ENCODE measurements at regions of chr15 and their contacts with region 1.

Region 1: GRCh38 chr15:81265944-81266775 is 57.8 kb downstream of the STARD5 start:
- DNase-seq: peak; percentile 74
- ATAC-seq: peak; percentile 95
- H3K4me3 ChIP-seq: peak overlapping the region; percentile 10 to 25; a peak in 3 of 4 replicates
- H3K27ac ChIP-seq: no peak overlapping the region
- H3K4me1 ChIP-seq: peaks cover 5 to 10% of the 10 kb centered on the region in 2 experiments
- H3K27me3 ChIP-seq: no peaks in the 10 kb centered on the region
- CTCF ChIP-seq: peak; percentile 86 to 95 (median 92)
- POLR2A ChIP-seq: no peak
- RAD21 ChIP-seq: peak; percentile 92

Region 2: DNA sequence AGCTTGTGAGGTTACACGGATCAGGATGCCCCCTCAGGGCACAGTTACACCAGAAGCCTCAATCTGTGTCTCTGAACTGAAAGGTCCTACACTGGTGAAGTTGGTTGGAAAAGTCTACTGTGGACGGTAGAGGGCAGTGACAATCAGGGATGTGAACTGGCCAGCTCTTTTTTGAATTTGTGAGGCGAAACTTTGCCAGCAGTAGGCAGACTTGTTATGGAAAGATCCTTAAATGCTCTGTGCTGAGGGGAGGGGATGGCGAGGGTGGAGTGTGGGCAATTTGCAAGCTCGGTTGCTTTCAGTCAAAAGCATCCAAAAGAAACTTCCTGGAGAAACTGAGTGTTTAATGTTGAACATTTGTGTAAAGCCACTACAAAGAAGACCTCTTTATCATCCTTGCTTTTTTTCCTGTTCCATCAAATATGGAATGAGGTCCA is 698.4 kb before region 1 on chr15:
- CTCF ChIA-PET with region 1: interaction called, 12 read pairs
- POLR2A ChIA-PET with region 1: no interaction called
- RAD21 ChIA-PET with region 1: interaction called in 1 of 2 experiments, 3 read pairs
- intact Hi-C with region 1: loop called (anchors 10 kb)
- DNase-seq: peak; percentile 72
- ATAC-seq: peak; percentile 97
- H3K4me3 ChIP-seq: no peak overlapping the region
- H3K27ac ChIP-seq: no peak overlapping the region
- H3K4me1 ChIP-seq: no peaks in the 10 kb centered on the region
- H3K27me3 ChIP-seq: no peaks in the 10 kb centered on the region
- CTCF ChIP-seq: peak; percentile 75 to 99 (median 88)
- POLR2A ChIP-seq: no peak
- RAD21 ChIP-seq: peak; percentile 96

Region 3: DNA sequence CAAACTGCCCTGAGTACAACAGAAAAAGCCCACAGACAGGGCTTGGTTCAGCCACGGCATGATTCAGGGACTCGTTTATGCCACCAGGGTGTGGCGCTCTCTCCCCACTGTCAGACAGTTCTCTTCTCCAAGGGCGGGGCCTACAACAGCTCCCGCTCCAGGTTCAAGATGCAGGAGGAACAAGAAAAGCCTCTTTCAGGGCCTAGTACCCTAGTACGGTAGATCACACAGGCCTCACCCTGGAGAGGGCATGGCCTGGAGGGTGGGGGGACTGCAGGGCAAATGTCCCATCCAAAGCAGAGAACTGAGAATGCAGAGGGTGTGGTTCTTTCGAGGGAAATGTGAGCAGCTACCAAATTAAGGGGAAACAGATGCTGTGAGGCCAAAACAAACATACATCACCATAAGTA is 288.5 kb before region 1 on chr15:
- CTCF ChIA-PET with region 1: interaction called, 88 read pairs
- POLR2A ChIA-PET with region 1: no interaction called
- RAD21 ChIA-PET with region 1: interaction called, 11 to 15 read pairs
- intact Hi-C with region 1: loop called (anchors 1 kb)
- DNase-seq: no peak
- ATAC-seq: peak; percentile 97
- H3K4me3 ChIP-seq: no peak overlapping the region
- H3K27ac ChIP-seq: no peak overlapping the region
- H3K4me1 ChIP-seq: peaks cover 8 to 22% of the 10 kb centered on the region in 2 experiments; a peak in 2 of 4 replicates
- H3K27me3 ChIP-seq: no peaks in the 10 kb centered on the region
- CTCF ChIP-seq: peak; percentile 70 to 81 (median 72); a peak in 5 of 6 replicates
- POLR2A ChIP-seq: no peak
- RAD21 ChIP-seq: peak; percentile 82

Region 4: DNA sequence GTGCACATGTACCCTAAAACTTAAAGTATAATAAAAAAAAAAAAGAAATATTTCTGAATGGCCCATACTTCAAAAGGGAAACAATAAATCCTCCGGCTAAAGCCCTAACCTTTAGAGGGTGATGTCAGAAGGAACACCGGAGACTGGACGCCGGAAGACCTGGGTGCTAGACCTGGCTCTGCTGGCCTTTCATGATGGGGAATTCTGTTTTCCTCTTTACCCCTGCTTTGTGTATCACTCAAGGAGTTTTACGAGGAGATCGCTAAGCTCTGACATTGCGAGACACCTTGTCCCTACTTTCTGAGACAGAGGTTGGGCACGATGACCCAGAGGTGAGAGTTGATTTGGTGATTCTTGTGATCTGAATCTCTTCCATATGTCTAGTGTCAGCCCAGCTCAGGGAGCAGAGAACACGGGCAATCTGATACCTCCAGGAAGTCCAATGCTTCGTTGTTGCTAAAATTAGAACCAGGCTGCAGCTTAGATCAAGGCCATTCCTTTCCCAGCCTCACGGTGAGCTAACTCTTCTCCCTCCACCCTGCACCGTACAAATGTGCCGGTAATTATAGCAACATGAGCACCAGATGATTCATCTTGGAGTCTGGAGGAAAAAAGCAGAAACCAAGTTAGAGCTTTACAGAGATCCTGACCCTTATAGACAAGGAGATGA is 174.1 kb before region 1 on chr15:
- CTCF ChIA-PET with region 1: interaction called, 27 read pairs
- POLR2A ChIA-PET with region 1: interaction called, 3 read pairs
- RAD21 ChIA-PET with region 1: interaction called in 1 of 2 experiments, 3 read pairs
- intact Hi-C with region 1: no loop called
- DNase-seq: peak; percentile 86
- ATAC-seq: peak; percentile 95
- H3K4me3 ChIP-seq: peak overlapping the region; percentile 20 to 49
- H3K27ac ChIP-seq: peak overlapping the region; percentile 87
- H3K4me1 ChIP-seq: peaks cover 12 to 16% of the 10 kb centered on the region in 2 experiments
- H3K27me3 ChIP-seq: no peaks in the 10 kb centered on the region
- CTCF ChIP-seq: no peak
- POLR2A ChIP-seq: no peak
- RAD21 ChIP-seq: peak; percentile 36; the same call in 1 of the 2 replicates

Region 5: GRCh38 chr15:81111510-81112470 is 154.4 kb before region 1 on chr15:
- CTCF ChIA-PET with region 1: interaction called, 175 read pairs
- POLR2A ChIA-PET with region 1: interaction called, 5 read pairs
- RAD21 ChIA-PET with region 1: interaction called, 7 to 12 read pairs
- intact Hi-C with region 1: loop called (anchors 1 kb)
- DNase-seq: no peak
- ATAC-seq: no peak
- H3K4me3 ChIP-seq: no peak overlapping the region
- H3K27ac ChIP-seq: no peak overlapping the region
- H3K4me1 ChIP-seq: peaks cover 10 to 13% of the 10 kb centered on the region in 2 experiments
- H3K27me3 ChIP-seq: peaks cover 25% of the 10 kb centered on the region
- CTCF ChIP-seq: no peak
- POLR2A ChIP-seq: no peak
- RAD21 ChIP-seq: no peak

Region 6: DNA sequence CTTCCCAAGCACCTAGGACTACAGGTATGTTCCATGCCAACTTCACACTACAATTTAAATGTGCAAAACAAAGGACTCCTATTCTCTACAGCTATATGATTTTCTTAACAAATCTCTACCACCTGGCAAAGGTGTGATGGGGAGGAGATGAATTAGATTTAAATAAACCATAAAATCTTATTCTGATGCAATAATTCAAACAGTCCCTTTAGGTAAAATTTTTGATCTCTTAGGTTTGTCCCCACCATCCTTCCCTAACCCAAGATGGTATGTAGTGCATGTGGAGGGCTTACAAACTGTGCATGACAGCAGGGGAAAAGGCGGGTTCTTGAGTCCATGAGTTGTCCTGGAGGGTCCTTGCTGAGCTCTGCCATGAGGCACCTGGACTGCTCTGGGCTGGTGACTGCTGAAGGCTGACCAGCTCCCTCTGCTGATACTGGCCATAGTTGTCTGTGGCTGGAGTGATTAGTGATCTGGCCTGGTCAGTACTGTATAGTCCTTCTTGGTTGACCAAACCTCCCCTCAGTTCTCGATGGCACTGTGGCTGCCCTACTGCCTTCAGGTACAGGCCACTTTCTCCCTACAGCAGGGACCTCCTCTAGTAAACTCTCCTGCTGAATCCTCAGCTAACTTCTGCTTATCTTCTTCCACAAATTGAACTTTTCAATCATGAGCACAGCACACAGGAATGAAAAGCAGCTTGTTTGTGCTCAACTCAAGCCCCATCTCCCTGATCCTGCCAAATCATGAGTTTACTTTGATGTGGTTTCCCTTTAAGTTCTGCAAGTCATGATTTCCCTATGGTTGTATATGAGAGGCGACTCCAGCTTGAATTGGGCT is 102.0 kb before region 1 on chr15:
- CTCF ChIA-PET with region 1: interaction called, 19 read pairs
- POLR2A ChIA-PET with region 1: no interaction called
- RAD21 ChIA-PET with region 1: interaction called in 1 of 2 experiments, 3 read pairs
- intact Hi-C with region 1: no loop called
- DNase-seq: no peak
- ATAC-seq: peak; percentile 73
- H3K4me3 ChIP-seq: no peak overlapping the region
- H3K27ac ChIP-seq: no peak overlapping the region
- H3K4me1 ChIP-seq: no peaks in the 10 kb centered on the region
- H3K27me3 ChIP-seq: peaks cover 3% of the 10 kb centered on the region; the same call in 1 of the 2 replicates
- CTCF ChIP-seq: no peak; a peak in 1 of 6 replicates
- POLR2A ChIP-seq: no peak
- RAD21 ChIP-seq: 0 out of 2 replicates have a peak, but pooled peaks have one; percentile 16

Region 7: GRCh38 chr15:81301385-81301784 is 35.2 kb after region 1 on chr15:
- CTCF ChIA-PET with region 1: no interaction called
- POLR2A ChIA-PET with region 1: no interaction called
- RAD21 ChIA-PET with region 1: no interaction called
- intact Hi-C with region 1: no loop called
- DNase-seq: no peak
- ATAC-seq: no peak
- H3K4me3 ChIP-seq: no peak overlapping the region
- H3K27ac ChIP-seq: no peak overlapping the region
- H3K4me1 ChIP-seq: peaks cover 11 to 22% of the 10 kb centered on the region in 2 experiments
- H3K27me3 ChIP-seq: no peaks in the 10 kb centered on the region
- CTCF ChIP-seq: no peak
- POLR2A ChIP-seq: no peak
- RAD21 ChIP-seq: no peak